Tibial artery (tissue), 4 donors: ENCODE measurements at regions of chr10 and their contacts with region 1.

Region 1: GRCh38 chr10:78424719-78425118 is 391.1 kb downstream of the RPS24 start:
- DNase-seq: peak in 1 of 2 donors; percentile 11
- H3K4me3 ChIP-seq: no peak overlapping the region
- H3K27ac ChIP-seq: no peak overlapping the region
- H3K4me1 ChIP-seq: no peaks in the 10 kb centered on the region
- H3K27me3 ChIP-seq: no peaks in the 10 kb centered on the region
- CTCF ChIP-seq: no peak

Region 2: GRCh38 chr10:78292982-78293865 is 131.5 kb before region 1 on chr10:
- intact Hi-C with region 1: no loop called
- DNase-seq: no peak
- H3K4me3 ChIP-seq: no peak overlapping the region
- H3K27ac ChIP-seq: no peak overlapping the region
- H3K4me1 ChIP-seq: no peaks in the 10 kb centered on the region
- H3K27me3 ChIP-seq: peaks cover 0 to 8% of the 10 kb centered on the region in 2 donors
- CTCF ChIP-seq: no peak

Region 3: GRCh38 chr10:78397786-78398185 is 26.9 kb before region 1 on chr10:
- intact Hi-C with region 1: loop called (anchors 2 kb)
- DNase-seq: no peak
- H3K4me3 ChIP-seq: no peak overlapping the region
- H3K27ac ChIP-seq: no peak overlapping the region
- H3K4me1 ChIP-seq: no peaks in the 10 kb centered on the region
- H3K27me3 ChIP-seq: no peaks in the 10 kb centered on the region
- CTCF ChIP-seq: no peak